Psoas muscle (tissue), 8 donors: ENCODE measurements at regions of chr20 and their contacts with region 1.

Region 1: DNA sequence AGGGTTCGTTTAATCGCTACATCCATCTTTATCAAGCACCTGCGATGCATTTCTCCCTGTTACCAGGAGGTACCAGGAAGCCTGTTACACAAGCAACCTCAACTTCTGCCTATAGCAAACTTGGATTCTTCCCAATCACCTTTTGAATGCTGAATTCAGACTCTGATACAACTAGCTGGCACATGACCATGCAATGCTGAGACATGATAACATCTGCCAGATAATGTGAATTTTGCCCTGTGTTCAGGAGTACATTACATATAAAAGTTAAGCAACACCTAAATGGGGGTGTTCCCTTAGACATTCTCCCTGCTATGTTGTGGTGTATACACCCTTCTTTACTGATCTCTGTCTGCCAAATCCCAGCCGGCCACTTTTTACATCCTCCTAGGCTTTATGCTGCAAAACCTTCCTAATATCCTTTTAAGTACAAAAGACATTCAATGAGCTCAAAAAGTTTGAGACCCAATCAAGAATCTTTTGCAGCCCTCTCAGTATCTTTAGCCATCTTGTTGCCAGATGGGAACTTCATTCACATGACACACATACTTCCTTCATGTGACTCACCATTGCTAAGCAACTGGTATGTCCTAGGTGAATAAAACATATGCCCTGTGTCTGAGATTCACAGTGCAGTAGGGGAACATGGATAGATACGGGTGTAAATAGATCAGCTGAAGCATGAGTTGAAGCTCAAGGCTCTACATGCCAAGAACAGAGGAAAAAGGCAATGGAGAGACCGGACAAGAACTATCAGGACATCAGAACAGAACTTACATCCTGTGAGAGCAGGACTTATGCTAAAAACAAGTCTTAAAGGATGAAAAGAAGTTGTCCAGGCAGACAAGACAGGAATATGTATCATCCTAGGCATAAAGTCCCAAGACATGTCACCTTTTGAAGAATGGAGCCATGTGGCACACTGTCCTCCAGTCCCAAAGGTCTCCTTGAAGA is 84.3 kb downstream of the ZHX3 start:
- DNase-seq: no peak
- ATAC-seq: peak; percentile 65 to 83 (median 74)
- H3K4me3 ChIP-seq: peak overlapping the region; percentile 43
- H3K27ac ChIP-seq: peak overlapping the region; percentile 72
- H3K4me1 ChIP-seq: peaks cover 54% of the 10 kb centered on the region
- H3K27me3 ChIP-seq: no peaks in the 10 kb centered on the region
- CTCF ChIP-seq: no peak

Region 2: GRCh38 chr20:41173161-41173721 is 60.0 kb before region 1 on chr20:
- intact Hi-C with region 1: loop called (anchors 2 to 5 kb)
- DNase-seq: peak; percentile 88 to 93
- ATAC-seq: peak; percentile 83 to 89 (median 86)
- H3K4me3 ChIP-seq: no peak overlapping the region
- H3K27ac ChIP-seq: peak overlapping the region; percentile 71
- H3K4me1 ChIP-seq: peaks cover 53% of the 10 kb centered on the region
- H3K27me3 ChIP-seq: no peaks in the 10 kb centered on the region
- CTCF ChIP-seq: peak; percentile 98

Region 3: GRCh38 chr20:41182296-41183212 is 50.7 kb before region 1 on chr20:
- intact Hi-C with region 1: loop called in 1 of 2 experiments (anchors 5 kb)
- DNase-seq: no peak
- ATAC-seq: no peak
- H3K4me3 ChIP-seq: no peak overlapping the region
- H3K27ac ChIP-seq: no peak overlapping the region
- H3K4me1 ChIP-seq: peaks cover 37% of the 10 kb centered on the region
- H3K27me3 ChIP-seq: no peaks in the 10 kb centered on the region
- CTCF ChIP-seq: no peak

Region 4: DNA sequence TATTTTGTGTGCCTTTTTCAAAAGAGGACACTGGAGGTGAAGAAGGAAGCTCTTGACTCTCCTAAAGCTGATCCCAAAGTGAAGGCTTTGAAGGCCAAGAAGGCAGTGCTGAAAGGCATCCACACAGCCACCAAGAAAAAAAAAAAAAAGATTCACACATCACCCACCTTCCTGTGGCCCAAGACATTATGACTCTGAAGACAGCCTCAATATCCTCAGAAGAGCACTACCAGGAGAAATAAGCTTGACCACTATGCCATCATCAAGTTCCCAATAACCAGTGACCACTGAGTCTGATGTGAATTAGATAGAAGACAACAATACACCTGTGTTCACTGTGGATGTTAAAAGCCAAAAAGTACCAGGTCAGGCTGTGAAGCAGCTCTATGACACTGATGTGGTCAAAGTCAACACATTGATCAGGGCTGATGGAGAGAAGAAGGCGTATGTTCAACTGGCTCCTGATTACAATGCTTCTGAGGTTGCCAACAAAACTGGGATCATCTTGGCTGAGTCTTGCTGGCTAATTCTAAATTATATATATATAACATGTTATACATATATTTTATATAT is 36.5 kb before region 1 on chr20:
- intact Hi-C with region 1: no loop called
- DNase-seq: no peak
- ATAC-seq: no peak
- H3K4me3 ChIP-seq: no peak overlapping the region
- H3K27ac ChIP-seq: no peak overlapping the region
- H3K4me1 ChIP-seq: peaks cover 11% of the 10 kb centered on the region
- H3K27me3 ChIP-seq: no peaks in the 10 kb centered on the region
- CTCF ChIP-seq: no peak

Region 5: GRCh38 chr20:41317536-41318270 is 84.5 kb after region 1 on chr20 and contains the start of gene ZHX3:
- intact Hi-C with region 1: loop called in 1 of 2 experiments (anchors 5 kb)
- DNase-seq: peak; percentile 98 to 99
- ATAC-seq: peak; percentile 94 to 97 (median 95)
- H3K4me3 ChIP-seq: peak within 1 kb of the TSS; percentile 89
- H3K27ac ChIP-seq: peak within 1 kb of the TSS; percentile 95
- H3K4me1 ChIP-seq: peaks cover 41% of the 10 kb centered on the region
- H3K27me3 ChIP-seq: no peaks in the 10 kb centered on the region
- CTCF ChIP-seq: no peak
- total RNA-seq, gene ZHX3: 39.6 to 47.7 (median 45.2) TPM

Region 6: GRCh38 chr20:41329435-41330342 is 96.4 kb after region 1 on chr20:
- intact Hi-C with region 1: loop called in 1 of 2 experiments (anchors 5 kb)
- DNase-seq: peak; percentile 87 to 92
- ATAC-seq: peak; percentile 97 to 99 (median 98)
- H3K4me3 ChIP-seq: peak overlapping the region; percentile 16
- H3K27ac ChIP-seq: peak overlapping the region; percentile 88
- H3K4me1 ChIP-seq: peaks cover 16% of the 10 kb centered on the region
- H3K27me3 ChIP-seq: no peaks in the 10 kb centered on the region
- CTCF ChIP-seq: no peak

Region 7: GRCh38 chr20:41339507-41340326 is 106.5 kb after region 1 on chr20:
- intact Hi-C with region 1: loop called (anchors 5 kb)
- DNase-seq: peak; percentile 81 to 90
- ATAC-seq: peak; percentile 84 to 93 (median 86)
- H3K4me3 ChIP-seq: peak overlapping the region; percentile 52
- H3K27ac ChIP-seq: peak overlapping the region; percentile 60
- H3K4me1 ChIP-seq: peaks cover 11% of the 10 kb centered on the region
- H3K27me3 ChIP-seq: no peaks in the 10 kb centered on the region
- CTCF ChIP-seq: peak; percentile 100

Region 8: DNA sequence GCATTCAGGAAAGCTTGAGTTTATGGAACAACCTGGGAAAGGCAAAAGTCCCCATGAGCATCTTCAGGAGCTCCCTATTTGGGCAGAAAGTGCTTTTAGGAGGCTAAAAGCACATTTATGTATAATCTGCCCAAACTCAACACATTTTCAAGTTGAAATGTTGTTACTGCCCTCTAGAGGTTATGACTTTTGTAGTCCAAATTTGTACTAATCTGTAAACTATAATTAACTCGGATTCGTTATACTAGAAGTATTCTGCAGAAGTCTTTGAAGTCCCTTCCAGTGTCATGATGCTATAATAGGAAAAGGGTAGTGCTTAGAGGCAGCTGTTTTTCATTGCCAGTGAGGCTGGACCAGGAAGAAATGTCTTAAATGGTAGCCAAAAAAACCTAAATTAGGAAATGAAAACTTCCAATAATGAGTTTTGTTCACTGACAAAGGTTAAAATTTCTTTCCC is 178.2 kb after region 1 on chr20:
- intact Hi-C with region 1: loop called in 1 of 2 experiments (anchors 5 kb)
- DNase-seq: no peak
- ATAC-seq: peak; percentile 80 to 90 (median 80)
- H3K4me3 ChIP-seq: no peak overlapping the region
- H3K27ac ChIP-seq: peak overlapping the region; percentile 81
- H3K4me1 ChIP-seq: peaks cover 53% of the 10 kb centered on the region
- H3K27me3 ChIP-seq: no peaks in the 10 kb centered on the region
- CTCF ChIP-seq: peak; percentile 53